ENCODE measurements at regions of chr12 and their contacts with region 1.

Region 1: GRCh38 chr12:32102234-32102633 is 4.4 kb upstream of the BICD1 start:
- DNase-seq: no peak
- H3K4me3 ChIP-seq: no peak overlapping the region
- H3K27ac ChIP-seq: no peak overlapping the region
- H3K4me1 ChIP-seq: no peaks in the 10 kb centered on the region
- H3K27me3 ChIP-seq: no peaks in the 10 kb centered on the region
- CTCF ChIP-seq: no peak

Region 2: DNA sequence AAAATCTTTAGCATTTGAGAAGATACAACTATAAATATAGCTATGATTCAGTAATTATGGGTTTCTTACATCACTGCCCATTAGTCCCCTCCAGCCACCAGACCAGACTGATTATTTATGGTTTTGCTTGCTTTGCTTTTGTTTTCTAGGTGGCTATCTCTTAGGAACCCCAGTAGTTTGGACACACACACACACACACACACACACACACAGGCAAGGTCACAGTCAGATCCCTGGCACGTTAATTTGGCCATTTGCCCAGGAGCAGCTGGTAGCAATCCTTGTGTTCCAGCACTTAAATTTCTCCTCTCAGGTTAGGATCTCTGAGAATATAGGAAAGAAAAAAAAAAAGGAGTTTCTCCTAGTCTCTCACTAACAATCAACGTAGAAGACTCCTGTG is 233.3 kb before region 1 on chr12:
- intact Hi-C with region 1: no loop called
- DNase-seq: no peak
- H3K4me3 ChIP-seq: no peak overlapping the region
- H3K27ac ChIP-seq: no peak overlapping the region
- H3K4me1 ChIP-seq: no peaks in the 10 kb centered on the region
- H3K27me3 ChIP-seq: no peaks in the 10 kb centered on the region
- CTCF ChIP-seq: no peak

Region 3: DNA sequence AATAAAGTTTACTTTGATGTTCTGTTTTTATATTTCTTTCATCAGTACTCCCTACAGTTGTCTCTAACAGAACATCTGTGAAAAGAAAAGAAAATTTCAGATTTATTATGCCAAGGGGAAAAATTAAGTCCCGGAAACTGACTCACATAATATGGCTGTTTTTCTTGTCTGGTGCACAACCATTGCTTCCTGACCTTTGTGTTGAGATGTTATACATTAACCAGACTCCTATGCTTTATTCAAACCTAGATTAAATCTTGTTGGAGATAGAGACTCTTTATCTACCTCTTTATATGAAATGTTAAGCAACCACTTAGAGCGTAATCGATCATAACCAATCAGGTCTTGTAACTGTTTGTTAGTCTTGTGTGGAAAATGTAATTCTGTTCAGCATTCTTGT is 33.2 kb before region 1 on chr12:
- intact Hi-C with region 1: loop called (anchors 5 kb)
- DNase-seq: no peak
- H3K4me3 ChIP-seq: no peak overlapping the region
- H3K27ac ChIP-seq: no peak overlapping the region
- H3K4me1 ChIP-seq: no peaks in the 10 kb centered on the region
- H3K27me3 ChIP-seq: no peaks in the 10 kb centered on the region
- CTCF ChIP-seq: no peak

Measured in colonic mucosa (tissue), 4 donors.